ENCODE measurements at regions of chr20 and their contacts with region 1.

Region 1: GRCh38 chr20:48620519-48621254 is 207.1 kb downstream of the PREX1 start:
- DNase-seq: peak; percentile 84 to 92
- ATAC-seq: peak; percentile 87 to 94
- H3K4me3 ChIP-seq: peak overlapping the region; percentile 42
- H3K27ac ChIP-seq: peak overlapping the region; percentile 80 to 83
- H3K4me1 ChIP-seq: peaks cover 28% of the 10 kb centered on the region
- CTCF ChIP-seq: peak; percentile 73
- EP300 ChIP-seq: no peak
- POLR2A ChIP-seq: no peak
- RAD21 ChIP-seq: peak; percentile 93 to 95

Region 2: DNA sequence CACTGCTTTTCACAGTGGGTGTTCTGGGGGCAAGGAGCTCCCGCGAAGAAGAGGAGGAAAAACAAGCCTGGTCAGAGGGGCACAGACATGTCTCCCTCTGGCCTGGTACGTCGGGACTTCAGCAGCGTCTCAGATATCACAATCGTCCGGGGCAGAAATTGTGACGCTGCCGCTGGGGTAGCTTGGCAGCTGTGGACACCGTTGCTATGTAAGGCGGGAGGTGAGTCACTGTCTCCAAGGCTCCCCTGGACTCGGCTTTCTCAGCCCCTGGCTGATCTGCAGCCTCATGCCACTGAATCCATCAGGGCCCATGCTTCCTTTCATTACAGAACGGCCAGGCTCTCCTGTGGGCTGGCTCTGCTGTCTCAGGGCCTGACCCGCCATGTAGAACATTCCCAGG is 934.1 kb before region 1 on chr20:
- CTCF ChIA-PET with region 1: interaction called, 232 read pairs
- POLR2A ChIA-PET with region 1: no interaction called
- DNase-seq: no peak
- ATAC-seq: peak; percentile 25 to 37; a peak in 5 of 6 replicates
- H3K4me3 ChIP-seq: no peak overlapping the region
- H3K27ac ChIP-seq: no peak overlapping the region; a peak in 1 of 6 replicates
- H3K4me1 ChIP-seq: peaks cover 17% of the 10 kb centered on the region
- CTCF ChIP-seq: no peak
- EP300 ChIP-seq: no peak
- POLR2A ChIP-seq: no peak
- RAD21 ChIP-seq: no peak

Region 3: GRCh38 chr20:47772995-47773716 is 847.5 kb before region 1 on chr20:
- CTCF ChIA-PET with region 1: interaction called, 13 read pairs
- POLR2A ChIA-PET with region 1: no interaction called
- DNase-seq: no peak
- ATAC-seq: no peak
- H3K4me3 ChIP-seq: no peak overlapping the region
- H3K27ac ChIP-seq: no peak overlapping the region
- H3K4me1 ChIP-seq: no peaks in the 10 kb centered on the region
- CTCF ChIP-seq: no peak
- EP300 ChIP-seq: no peak
- POLR2A ChIP-seq: no peak
- RAD21 ChIP-seq: no peak

Region 4: GRCh38 chr20:48295445-48295963 is 325.2 kb before region 1 on chr20:
- CTCF ChIA-PET with region 1: interaction called, 85 read pairs
- POLR2A ChIA-PET with region 1: interaction called, 3 read pairs
- DNase-seq: peak; percentile 80 to 88
- ATAC-seq: peak; percentile 83 to 87
- H3K4me3 ChIP-seq: no peak overlapping the region
- H3K27ac ChIP-seq: peak overlapping the region; percentile 60 to 85
- H3K4me1 ChIP-seq: peaks cover 57% of the 10 kb centered on the region
- CTCF ChIP-seq: peak; percentile 75
- EP300 ChIP-seq: peak in 1 of 2 experiments; percentile 68; a peak in 2 of 5 replicates
- POLR2A ChIP-seq: no peak
- RAD21 ChIP-seq: peak; percentile 93

Region 5: DNA sequence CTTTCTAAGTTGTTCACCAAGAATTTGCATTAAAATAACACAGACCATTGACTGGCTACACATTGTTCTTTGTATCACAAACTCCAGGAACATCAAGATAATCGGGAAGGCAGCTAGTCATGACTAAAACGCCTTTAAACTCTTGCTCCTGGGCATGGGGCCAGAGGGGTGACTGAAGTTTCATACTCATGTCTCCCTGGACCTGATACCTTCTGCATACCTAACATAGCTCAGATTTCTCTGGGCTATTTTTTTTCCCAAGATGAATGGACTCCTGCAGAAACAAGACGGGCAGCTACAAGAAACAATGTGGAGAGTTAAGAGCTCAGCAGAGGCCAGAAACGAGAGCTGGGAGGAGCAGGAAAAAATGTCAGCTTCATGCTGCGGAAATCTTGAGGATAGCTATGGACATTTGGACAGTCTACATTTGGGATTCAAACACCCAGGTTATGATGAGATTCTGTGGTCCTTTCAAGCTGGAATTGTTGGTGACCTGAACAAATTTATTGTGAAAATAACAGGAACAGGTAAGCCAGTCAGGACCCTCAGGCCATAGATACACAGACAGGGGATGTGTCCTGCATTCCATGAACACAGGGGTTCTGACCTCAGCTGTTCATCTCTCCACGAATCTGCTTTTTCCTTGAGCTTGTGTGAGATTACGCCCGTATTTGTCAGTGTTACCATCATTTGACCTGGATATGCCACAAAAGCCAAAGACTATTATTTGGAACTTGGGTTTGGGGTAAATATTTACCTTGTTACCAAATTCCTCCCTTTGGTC is 82.1 kb before region 1 on chr20:
- CTCF ChIA-PET with region 1: interaction called, 15 read pairs
- POLR2A ChIA-PET with region 1: no interaction called
- DNase-seq: peak; percentile 51 to 55
- ATAC-seq: peak; percentile 80 to 84; a peak in 5 of 6 replicates
- H3K4me3 ChIP-seq: no peak overlapping the region
- H3K27ac ChIP-seq: peak overlapping the region; percentile 42 to 75
- H3K4me1 ChIP-seq: peaks cover 20% of the 10 kb centered on the region
- CTCF ChIP-seq: no peak
- EP300 ChIP-seq: no peak
- POLR2A ChIP-seq: no peak
- RAD21 ChIP-seq: no peak

Region 6: DNA sequence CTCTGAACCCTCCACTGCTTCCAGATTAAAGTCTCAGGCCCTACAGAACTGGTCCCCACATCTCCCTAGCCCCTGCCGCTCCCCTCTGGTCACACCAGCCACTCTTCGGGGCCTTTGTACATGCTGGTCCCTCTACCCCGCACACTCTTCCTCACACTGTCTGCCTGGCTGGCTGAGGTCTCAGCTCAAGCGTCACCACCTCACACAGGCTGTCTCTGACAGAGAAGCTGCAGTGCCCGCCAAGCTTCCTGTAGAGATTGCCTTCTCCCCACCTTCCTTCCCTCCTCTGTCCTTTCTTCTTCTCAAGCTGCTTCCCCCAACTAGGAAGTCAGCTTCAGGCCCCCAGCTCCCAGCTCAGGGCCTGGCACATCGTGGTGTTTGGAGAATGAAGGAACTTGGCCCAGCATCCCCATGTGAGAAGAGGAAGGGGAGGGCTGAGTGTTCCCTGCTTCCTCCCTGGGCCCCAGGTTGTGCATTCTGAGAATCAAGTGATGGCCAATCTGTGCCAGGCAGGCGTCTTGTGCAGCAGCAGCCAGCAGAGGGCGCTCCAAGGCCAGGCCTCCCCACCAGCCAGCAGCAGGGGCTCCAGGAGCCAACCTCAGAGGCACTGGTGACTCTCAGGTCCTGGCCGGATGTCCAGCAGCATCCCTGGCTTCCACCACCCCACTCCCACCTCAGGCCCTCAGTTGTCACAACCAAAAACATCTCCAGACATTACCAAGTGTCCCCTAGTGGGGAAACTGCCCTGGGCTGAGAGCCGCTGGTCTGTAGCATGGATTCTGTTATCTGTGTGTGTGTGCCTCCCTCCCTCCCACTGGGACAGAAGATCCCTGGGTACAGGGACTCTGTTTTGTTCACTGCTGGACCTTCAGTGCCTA is 15.0 kb after region 1 on chr20:
- CTCF ChIA-PET with region 1: interaction called, 42 read pairs
- POLR2A ChIA-PET with region 1: no interaction called
- DNase-seq: peak; percentile 54 to 73
- ATAC-seq: peak; percentile 80 to 95
- H3K4me3 ChIP-seq: no peak overlapping the region
- H3K27ac ChIP-seq: no peak overlapping the region
- H3K4me1 ChIP-seq: no peaks in the 10 kb centered on the region
- CTCF ChIP-seq: peak; percentile 64
- EP300 ChIP-seq: no peak
- POLR2A ChIP-seq: no peak
- RAD21 ChIP-seq: peak; percentile 77 to 82